BJ (cell line): ENCODE measurements at regions of chr15 and their contacts with region 1.

Region 1: GRCh38 chr15:68550481-68551295 is 28.1 kb upstream of the CORO2B start:
- DNase-seq: no peak
- H3K4me3 ChIP-seq: no peak overlapping the region
- H3K27me3 ChIP-seq: peaks cover 1% of the 10 kb centered on the region; the same call in 1 of the 2 replicates
- CTCF ChIP-seq: peak; percentile 86

Region 2: GRCh38 chr15:68252925-68253534 is 297.7 kb before region 1 on chr15:
- CTCF ChIA-PET with region 1: interaction called, 17 read pairs
- POLR2A ChIA-PET with region 1: no interaction called
- DNase-seq: no peak
- H3K4me3 ChIP-seq: no peak overlapping the region
- H3K27me3 ChIP-seq: no peaks in the 10 kb centered on the region
- CTCF ChIP-seq: peak; percentile 85

Region 3: GRCh38 chr15:68431037-68431791 is 119.5 kb before region 1 on chr15:
- CTCF ChIA-PET with region 1: interaction called, 10 read pairs
- POLR2A ChIA-PET with region 1: no interaction called
- DNase-seq: no peak
- H3K4me3 ChIP-seq: peak overlapping the region; percentile 57
- H3K27me3 ChIP-seq: peaks cover 25% of the 10 kb centered on the region
- CTCF ChIP-seq: no peak

Region 4: DNA sequence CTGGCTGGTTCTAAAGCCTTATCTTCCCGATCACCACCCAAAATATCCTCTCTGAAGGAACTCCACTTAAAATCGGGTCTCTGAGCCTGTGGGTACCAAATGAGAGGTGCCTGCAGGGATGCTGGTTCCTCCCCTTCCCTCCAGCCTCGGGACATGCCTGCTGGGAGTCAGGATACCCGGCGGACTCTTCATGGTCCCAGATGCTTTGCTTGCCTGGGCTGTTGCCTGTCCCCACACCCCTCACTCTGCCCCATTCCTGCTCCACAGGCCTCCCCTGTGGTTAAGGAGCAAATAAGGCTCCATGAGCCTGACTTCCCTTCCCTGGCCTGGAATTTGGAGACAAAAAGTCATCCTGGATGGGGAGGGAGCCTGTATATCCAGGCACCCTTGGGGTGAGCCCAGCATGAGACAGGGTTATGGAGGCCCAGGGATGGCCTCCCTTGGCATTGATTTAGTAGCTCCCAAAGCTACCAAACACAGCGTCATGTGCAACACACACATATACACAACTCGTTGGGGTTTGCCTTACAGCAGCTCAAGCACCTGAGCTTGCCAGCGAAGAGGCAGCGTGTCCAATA is 15.8 kb after region 1 on chr15:
- CTCF ChIA-PET with region 1: interaction called, 15 read pairs
- POLR2A ChIA-PET with region 1: no interaction called
- DNase-seq: no peak
- H3K4me3 ChIP-seq: no peak overlapping the region
- H3K27me3 ChIP-seq: peaks cover 5% of the 10 kb centered on the region
- CTCF ChIP-seq: no peak

Region 5: GRCh38 chr15:68672781-68673205 is 122.1 kb after region 1 on chr15:
- CTCF ChIA-PET with region 1: interaction called, 153 read pairs
- POLR2A ChIA-PET with region 1: interaction called, 4 read pairs
- DNase-seq: no peak
- H3K4me3 ChIP-seq: no peak overlapping the region
- H3K27me3 ChIP-seq: no peaks in the 10 kb centered on the region
- CTCF ChIP-seq: peak; percentile 39

Region 6: DNA sequence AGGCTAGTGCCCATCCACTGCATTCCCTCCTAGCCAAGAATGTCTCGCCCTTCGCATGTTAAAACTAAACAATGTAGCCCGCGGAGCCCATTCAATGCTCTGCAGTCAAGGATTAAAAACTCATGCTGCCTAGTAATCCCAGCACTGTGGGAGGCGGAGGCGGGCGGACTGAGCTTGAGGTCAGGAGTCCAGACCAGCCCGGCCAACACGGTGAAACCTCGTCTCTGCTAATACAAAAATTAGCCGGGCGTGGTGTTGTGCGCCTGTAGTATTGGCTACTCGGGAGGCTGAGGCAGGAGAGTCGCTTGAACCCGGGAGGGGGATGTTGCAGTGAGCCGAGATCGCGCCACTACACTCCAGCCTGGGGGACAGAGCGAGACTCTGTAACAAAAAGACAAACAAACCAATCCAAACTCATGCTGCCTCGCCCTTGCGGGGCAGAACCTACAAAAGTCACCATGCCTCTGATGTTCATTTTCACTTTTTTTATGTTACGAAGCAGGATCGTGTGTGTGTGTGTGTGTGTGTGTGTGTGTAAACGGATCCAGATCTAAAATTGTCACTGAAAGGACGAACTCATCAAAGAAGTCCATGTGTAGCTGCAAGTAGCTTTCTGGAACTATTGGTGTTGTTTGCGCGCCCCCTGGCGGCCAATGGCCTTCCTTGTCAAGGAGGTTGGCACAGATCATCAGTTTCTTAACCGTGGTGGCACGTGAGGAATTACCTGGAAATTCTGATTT is 324.9 kb after region 1 on chr15:
- CTCF ChIA-PET with region 1: interaction called, 61 read pairs
- POLR2A ChIA-PET with region 1: no interaction called
- DNase-seq: peak; percentile 39
- H3K4me3 ChIP-seq: peak overlapping the region; percentile 12
- H3K27me3 ChIP-seq: peaks cover 4% of the 10 kb centered on the region
- CTCF ChIP-seq: peak; percentile 84